PC-9 (cell line): ENCODE measurements at regions of chr15 and their contacts with region 1.

Region 1: GRCh38 chr15:41230650-41231533 is at the starts of genes CHP1 and EXD1:
- DNase-seq: peak; percentile 86 to 97
- H3K4me3 ChIP-seq: peak within 1 kb of the TSS; percentile 90
- H3K27ac ChIP-seq: peak within 1 kb of the TSS; percentile 74
- H3K4me1 ChIP-seq: peaks cover 27% of the 10 kb centered on the region
- H3K27me3 ChIP-seq: no peaks in the 10 kb centered on the region
- CTCF ChIP-seq: peak; percentile 92
- total RNA-seq, gene CHP1: 133 and 199 TPM in 2 replicates
- total RNA-seq, gene EXD1: 0.70 TPM in 1 of 2 replicates, not detected in the other

Region 2: GRCh38 chr15:40930430-40931299 is 300.2 kb before region 1 on chr15:
- CTCF ChIA-PET with region 1: interaction called, 18 read pairs
- POLR2A ChIA-PET with region 1: no interaction called
- intact Hi-C with region 1: no loop called
- DNase-seq: no peak
- H3K4me3 ChIP-seq: peak overlapping the region; percentile 77; the same call in 1 of the 2 replicates
- H3K27ac ChIP-seq: no peak overlapping the region
- H3K4me1 ChIP-seq: 0 out of 2 replicates have a peak, but pooled peaks cover 6% of the 10 kb centered on the region
- H3K27me3 ChIP-seq: peaks cover 29% of the 10 kb centered on the region
- CTCF ChIP-seq: peak; percentile 65

Region 3: GRCh38 chr15:41116116-41116871 is 114.6 kb before region 1 on chr15 and contains the start of gene INO80:
- CTCF ChIA-PET with region 1: no interaction called
- POLR2A ChIA-PET with region 1: no interaction called
- intact Hi-C with region 1: loop called (anchors 2 kb)
- DNase-seq: peak; percentile 91 to 96
- H3K4me3 ChIP-seq: peak within 1 kb of the TSS; percentile 90
- H3K27ac ChIP-seq: peak within 1 kb of the TSS; percentile 98
- H3K4me1 ChIP-seq: peaks cover 6% of the 10 kb centered on the region; the same call in 1 of the 2 replicates
- H3K27me3 ChIP-seq: no peaks in the 10 kb centered on the region
- CTCF ChIP-seq: no peak
- total RNA-seq, gene INO80: 11.3 and 18.8 TPM in 2 replicates

Region 4: DNA sequence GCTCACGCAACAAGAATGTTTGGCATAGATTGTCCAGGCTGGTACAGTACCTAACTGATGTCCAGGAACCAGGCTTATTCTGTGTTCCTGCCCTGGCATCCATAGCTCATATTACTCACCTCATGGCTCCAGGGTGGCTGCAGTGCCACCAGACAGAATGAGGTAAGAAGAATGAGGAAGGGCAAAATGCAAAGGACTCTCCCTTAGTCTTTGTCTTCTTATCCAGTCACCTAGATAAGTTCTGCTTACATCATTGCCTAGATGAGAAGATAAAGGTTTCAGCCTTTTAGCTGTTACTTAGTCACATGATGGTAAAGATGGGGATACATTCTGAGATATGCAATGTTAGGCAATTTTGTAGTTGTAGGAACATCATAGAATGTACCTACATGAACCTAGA is 45.9 kb after region 1 on chr15:
- CTCF ChIA-PET with region 1: interaction called, 3 read pairs
- POLR2A ChIA-PET with region 1: interaction called, 4 read pairs
- intact Hi-C with region 1: loop called (anchors 2 kb)
- DNase-seq: peak; percentile 57 to 86
- H3K4me3 ChIP-seq: no peak overlapping the region
- H3K27ac ChIP-seq: peak overlapping the region; percentile 23; the same call in 1 of the 2 replicates
- H3K4me1 ChIP-seq: peaks cover 22% of the 10 kb centered on the region
- H3K27me3 ChIP-seq: no peaks in the 10 kb centered on the region
- CTCF ChIP-seq: no peak

Region 5: GRCh38 chr15:41283653-41284426 is 52.9 kb after region 1 on chr15:
- CTCF ChIA-PET with region 1: no interaction called
- POLR2A ChIA-PET with region 1: interaction called, 4 read pairs
- intact Hi-C with region 1: loop called (anchors 1 kb)
- DNase-seq: peak; percentile 90 to 95
- H3K4me3 ChIP-seq: peak overlapping the region; percentile 79
- H3K27ac ChIP-seq: peak overlapping the region; percentile 59
- H3K4me1 ChIP-seq: peaks cover 32% of the 10 kb centered on the region
- H3K27me3 ChIP-seq: no peaks in the 10 kb centered on the region
- CTCF ChIP-seq: no peak

Region 6: GRCh38 chr15:41331833-41332787 is 101.2 kb after region 1 on chr15 and contains the start of gene OIP5:
- CTCF ChIA-PET with region 1: no interaction called
- POLR2A ChIA-PET with region 1: no interaction called
- intact Hi-C with region 1: loop called (anchors 1 kb)
- DNase-seq: peak; percentile 97 to 98
- H3K4me3 ChIP-seq: peak within 1 kb of the TSS; percentile 85
- H3K27ac ChIP-seq: peak within 1 kb of the TSS; percentile 58
- H3K4me1 ChIP-seq: peaks cover 22% of the 10 kb centered on the region; the same call in 1 of the 2 replicates
- H3K27me3 ChIP-seq: no peaks in the 10 kb centered on the region
- CTCF ChIP-seq: peak; percentile 73
- total RNA-seq, gene OIP5: 23.9 and 25.4 TPM in 2 replicates

Region 7: DNA sequence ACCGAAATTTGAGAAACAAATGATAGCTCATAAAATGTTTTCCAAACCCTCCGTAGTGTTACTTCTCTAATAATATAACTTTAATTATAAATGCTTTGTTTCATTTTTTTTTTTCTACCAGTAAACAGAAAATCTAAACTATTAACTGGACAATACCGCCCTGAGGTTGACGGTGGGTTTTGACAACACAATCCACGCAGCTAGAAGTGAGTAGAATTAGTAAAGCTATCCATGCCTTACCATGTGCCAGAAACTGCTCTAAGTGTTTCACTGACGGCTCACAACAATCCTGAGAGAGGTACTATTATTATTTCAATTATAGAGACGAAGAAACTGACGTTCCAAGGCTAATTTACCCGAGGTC is 171.0 kb after region 1 on chr15:
- CTCF ChIA-PET with region 1: no interaction called
- POLR2A ChIA-PET with region 1: interaction called, 10 read pairs
- intact Hi-C with region 1: no loop called
- DNase-seq: no peak
- H3K4me3 ChIP-seq: peak overlapping the region; percentile 95
- H3K27ac ChIP-seq: peak overlapping the region; percentile 50; the same call in 1 of the 2 replicates
- H3K4me1 ChIP-seq: no peaks in the 10 kb centered on the region
- H3K27me3 ChIP-seq: no peaks in the 10 kb centered on the region
- CTCF ChIP-seq: no peak

Region 8: GRCh38 chr15:41483115-41483514 is 252.2 kb after region 1 on chr15:
- CTCF ChIA-PET with region 1: no interaction called
- POLR2A ChIA-PET with region 1: no interaction called
- intact Hi-C with region 1: no loop called
- DNase-seq: no peak
- H3K4me3 ChIP-seq: no peak overlapping the region
- H3K27ac ChIP-seq: no peak overlapping the region
- H3K4me1 ChIP-seq: no peaks in the 10 kb centered on the region
- H3K27me3 ChIP-seq: no peaks in the 10 kb centered on the region
- CTCF ChIP-seq: no peak